Activated naive CD4-positive, alpha-beta T cell treated with anti-CD3 and anti-CD28 coated beads for 36 hours (primary cell): ENCODE measurements at regions of chr3 and their contacts with region 1.

Region 1: GRCh38 chr3:18988614-18989229 is 159.6 kb upstream of the KCNH8 start:
- DNase-seq: no peak
- H3K4me3 Mint-ChIP-seq: peak overlapping the region; percentile 74
- H3K27ac Mint-ChIP-seq: peak overlapping the region; percentile 71
- H3K4me1 Mint-ChIP-seq: peaks cover 20% of the 10 kb centered on the region
- H3K27me3 Mint-ChIP-seq: peaks cover 15% of the 10 kb centered on the region

Region 2: GRCh38 chr3:17894434-17895060 is 1094.2 kb before region 1 on chr3:
- CTCF ChIA-PET with region 1: interaction called, 13 read pairs
- intact Hi-C with region 1: loop called (anchors 1 kb)
- DNase-seq: peak; percentile 69
- H3K4me3 Mint-ChIP-seq: no peak overlapping the region
- H3K27ac Mint-ChIP-seq: no peak overlapping the region
- H3K4me1 Mint-ChIP-seq: no peaks in the 10 kb centered on the region
- H3K27me3 Mint-ChIP-seq: no peaks in the 10 kb centered on the region

Region 3: GRCh38 chr3:18444595-18445400 is 543.9 kb before region 1 on chr3:
- CTCF ChIA-PET with region 1: no interaction called
- intact Hi-C with region 1: loop called (anchors 2 kb)
- DNase-seq: peak; percentile 83
- H3K4me3 Mint-ChIP-seq: peak overlapping the region; percentile 94
- H3K27ac Mint-ChIP-seq: peak overlapping the region; percentile 97
- H3K4me1 Mint-ChIP-seq: peaks cover 36% of the 10 kb centered on the region
- H3K27me3 Mint-ChIP-seq: no peaks in the 10 kb centered on the region

Region 4: DNA sequence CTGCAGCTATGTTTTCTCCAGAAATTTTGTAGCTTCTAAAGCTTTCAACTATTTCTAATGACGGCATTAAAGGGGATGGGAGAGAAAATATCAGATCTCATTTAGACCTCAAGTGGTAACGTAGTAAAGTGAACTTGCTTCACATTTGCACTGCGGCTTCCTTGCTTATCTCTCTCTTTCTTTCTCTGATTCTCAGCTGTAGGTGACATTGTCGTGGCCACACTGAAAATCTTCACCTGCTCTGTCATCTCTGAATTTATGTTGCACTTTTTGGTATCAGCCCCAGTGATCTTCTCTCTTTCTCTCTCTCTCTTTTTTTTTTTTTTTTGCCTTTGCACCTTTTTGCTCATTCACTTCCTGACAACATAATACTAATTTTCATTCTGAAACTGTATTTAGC is 309.5 kb before region 1 on chr3:
- CTCF ChIA-PET with region 1: no interaction called
- intact Hi-C with region 1: loop called (anchors 5 kb)
- DNase-seq: peak; percentile 77
- H3K4me3 Mint-ChIP-seq: peak overlapping the region; percentile 31
- H3K27ac Mint-ChIP-seq: peak overlapping the region; percentile 81
- H3K4me1 Mint-ChIP-seq: peaks cover 81% of the 10 kb centered on the region
- H3K27me3 Mint-ChIP-seq: no peaks in the 10 kb centered on the region

Region 5: DNA sequence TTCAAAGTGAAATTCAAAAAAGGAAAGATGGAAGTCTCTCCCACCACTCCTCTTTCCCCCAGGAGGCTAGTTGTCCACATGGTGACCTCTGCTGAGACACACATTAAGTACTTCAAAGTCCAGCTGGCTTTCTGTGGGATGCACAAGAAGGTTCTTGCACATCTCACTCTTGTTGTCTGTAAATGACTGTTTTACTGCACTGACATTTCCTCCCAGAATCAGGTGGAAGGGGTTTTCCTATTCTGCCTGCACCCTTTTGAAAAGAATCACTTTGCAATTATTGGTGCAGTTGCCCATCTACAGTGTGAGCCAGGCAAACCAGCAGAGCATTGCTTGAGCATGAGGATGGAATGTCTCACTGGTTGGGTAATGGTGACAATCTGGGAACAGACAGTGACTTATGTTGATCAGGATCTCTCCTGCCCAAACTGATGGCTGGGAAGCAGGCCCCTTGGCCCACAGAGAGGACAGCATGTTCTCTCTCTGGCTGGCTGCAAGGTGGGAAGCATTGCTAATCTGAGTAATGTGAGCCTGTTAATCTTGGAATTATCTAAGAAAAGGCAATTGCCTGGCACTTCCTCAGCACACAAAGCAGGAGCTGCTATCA is 215.9 kb before region 1 on chr3:
- CTCF ChIA-PET with region 1: no interaction called
- intact Hi-C with region 1: loop called (anchors 2 kb)
- DNase-seq: peak; percentile 34
- H3K4me3 Mint-ChIP-seq: no peak overlapping the region
- H3K27ac Mint-ChIP-seq: no peak overlapping the region
- H3K4me1 Mint-ChIP-seq: peaks cover 47% of the 10 kb centered on the region
- H3K27me3 Mint-ChIP-seq: no peaks in the 10 kb centered on the region

Region 6: DNA sequence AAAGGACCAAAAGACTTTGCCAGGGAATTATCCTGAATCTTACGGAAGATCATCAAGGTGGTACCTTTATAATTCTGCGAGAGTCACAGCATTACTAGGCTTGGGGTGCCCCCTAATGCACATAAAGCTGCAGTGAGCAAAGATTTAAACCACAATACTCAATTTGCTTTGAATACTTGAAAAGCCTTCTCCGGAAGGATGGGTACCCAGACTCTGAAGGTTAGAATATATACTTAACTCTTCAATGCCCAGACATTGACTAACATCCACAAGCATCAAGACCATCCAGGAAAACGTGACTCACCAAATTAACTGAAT is 41.8 kb after region 1 on chr3:
- CTCF ChIA-PET with region 1: interaction called, 7 read pairs
- intact Hi-C with region 1: loop called (anchors 2 kb)
- DNase-seq: peak; percentile 44
- H3K4me3 Mint-ChIP-seq: no peak overlapping the region
- H3K27ac Mint-ChIP-seq: no peak overlapping the region
- H3K4me1 Mint-ChIP-seq: peaks cover 5% of the 10 kb centered on the region
- H3K27me3 Mint-ChIP-seq: peaks cover 4% of the 10 kb centered on the region

Region 7: DNA sequence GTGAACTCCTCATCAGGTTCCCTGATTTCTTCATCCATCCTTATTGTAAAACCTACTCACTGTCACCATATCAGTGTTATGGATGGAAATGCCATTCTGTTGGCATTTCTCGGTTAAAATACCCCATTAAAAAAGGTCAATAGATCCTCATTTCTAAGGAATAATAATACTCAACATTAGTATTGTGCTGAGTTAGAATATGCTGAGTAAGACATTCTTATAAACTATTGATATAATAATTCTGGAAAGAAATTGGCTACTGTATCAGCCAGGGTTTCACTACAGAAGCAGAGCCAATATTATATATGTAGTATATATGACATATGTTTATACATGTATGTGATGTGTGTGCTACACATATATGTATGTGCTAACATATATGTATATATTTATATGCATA is 64.2 kb after region 1 on chr3:
- CTCF ChIA-PET with region 1: no interaction called
- intact Hi-C with region 1: no loop called
- DNase-seq: no peak
- H3K4me3 Mint-ChIP-seq: no peak overlapping the region
- H3K27ac Mint-ChIP-seq: no peak overlapping the region
- H3K4me1 Mint-ChIP-seq: no peaks in the 10 kb centered on the region
- H3K27me3 Mint-ChIP-seq: no peaks in the 10 kb centered on the region